ENCODE measurements at regions of chr12 and their contacts with region 1.

Region 1: DNA sequence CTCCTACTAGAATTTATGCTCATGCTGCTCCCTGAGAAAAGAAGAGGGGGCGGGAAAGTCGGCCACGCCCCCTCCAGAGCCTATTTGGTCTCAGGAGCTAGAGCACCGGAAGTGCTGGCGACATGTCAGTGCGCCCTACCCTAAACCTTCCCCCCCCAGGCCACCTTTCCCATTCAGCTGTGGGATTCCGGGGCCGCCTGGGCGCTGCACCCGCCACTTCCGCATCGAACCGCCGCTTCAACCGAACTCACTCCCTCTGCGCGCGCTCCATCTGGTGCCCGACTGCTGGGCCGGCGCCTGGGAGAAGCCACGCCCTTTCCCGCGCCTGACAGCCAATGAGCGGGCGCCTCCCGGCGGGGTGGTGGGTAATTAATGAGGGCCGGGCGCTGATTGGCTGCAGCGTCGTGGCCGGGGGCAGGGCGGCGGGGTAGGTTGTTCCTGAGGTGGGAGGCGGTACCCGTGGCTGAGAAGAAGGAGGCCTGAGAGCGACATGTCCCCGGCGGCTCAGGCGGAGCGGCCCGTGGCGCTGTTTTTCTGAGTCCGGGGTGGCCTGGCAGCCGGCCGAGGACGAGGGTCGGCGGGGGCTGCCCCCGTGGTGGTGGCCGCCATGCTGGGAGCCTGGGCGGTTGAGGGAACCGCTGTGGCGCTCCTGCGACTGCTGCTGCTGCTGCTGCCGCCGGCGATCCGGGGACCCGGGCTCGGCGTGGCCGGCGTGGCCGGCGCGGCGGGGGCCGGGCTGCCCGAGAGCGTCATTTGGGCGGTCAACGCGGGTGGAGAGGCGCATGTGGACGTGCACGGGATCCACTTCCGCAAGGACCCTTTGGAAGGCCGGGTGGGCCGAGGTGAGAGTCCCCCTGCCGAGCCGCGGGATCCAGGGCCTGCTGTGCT is at the start of gene MLEC:
- DNase-seq: peak; percentile 98
- H3K4me3 Mint-ChIP-seq: peak within 1 kb of the TSS; percentile 87
- H3K27ac Mint-ChIP-seq: peak within 1 kb of the TSS; percentile 86
- H3K4me1 Mint-ChIP-seq: peaks cover 27% of the 10 kb centered on the region
- H3K27me3 Mint-ChIP-seq: no peaks in the 10 kb centered on the region
- CTCF ChIP-seq: no peak
- total RNA-seq, gene MLEC: 107 and 144 TPM in 2 replicates

Region 2: GRCh38 chr12:120698665-120699064 is 11.7 kb after region 1 on chr12:
- CTCF ChIA-PET with region 1: interaction called, 6 read pairs
- POLR2A ChIA-PET with region 1: interaction called, 12 read pairs
- intact Hi-C with region 1: no loop called
- DNase-seq: no peak
- H3K4me3 Mint-ChIP-seq: no peak overlapping the region
- H3K27ac Mint-ChIP-seq: no peak overlapping the region
- H3K4me1 Mint-ChIP-seq: no peaks in the 10 kb centered on the region
- H3K27me3 Mint-ChIP-seq: no peaks in the 10 kb centered on the region
- CTCF ChIP-seq: no peak

Measured in MCF 10A (cell line).